Caco-2 (cell line): ENCODE measurements at regions of chr6 and their contacts with region 1.

Region 1: GRCh38 chr6:43723737-43724295 is 36.2 kb upstream of the MRPS18A start:
- DNase-seq: peak; percentile 74 to 82
- H3K4me3 ChIP-seq: no peak overlapping the region
- H3K4me3 Mint-ChIP-seq: no peak overlapping the region
- H3K27ac Mint-ChIP-seq: no peak overlapping the region
- H3K4me1 ChIP-seq: no peaks in the 10 kb centered on the region
- H3K4me1 Mint-ChIP-seq: no peaks in the 10 kb centered on the region
- H3K27me3 ChIP-seq: no peaks in the 10 kb centered on the region
- H3K27me3 Mint-ChIP-seq: no peaks in the 10 kb centered on the region
- CTCF ChIP-seq: peak; percentile 73 to 79

Region 2: GRCh38 chr6:43667245-43668150 is 56.3 kb before region 1 on chr6:
- CTCF ChIA-PET with region 1: no interaction called
- POLR2A ChIA-PET with region 1: no interaction called
- intact Hi-C with region 1: loop called (anchors 5 kb)
- DNase-seq: peak; percentile 84 to 91
- H3K4me3 ChIP-seq: 0 out of 2 replicates have a peak overlapping the region, but pooled peaks have one; percentile 4
- H3K4me3 Mint-ChIP-seq: peak overlapping the region; percentile 56
- H3K27ac Mint-ChIP-seq: peak overlapping the region; percentile 73
- H3K4me1 ChIP-seq: peaks cover 9% of the 10 kb centered on the region
- H3K4me1 Mint-ChIP-seq: no peaks in the 10 kb centered on the region
- H3K27me3 ChIP-seq: no peaks in the 10 kb centered on the region
- H3K27me3 Mint-ChIP-seq: no peaks in the 10 kb centered on the region
- CTCF ChIP-seq: peak; percentile 93 to 94

Region 3: DNA sequence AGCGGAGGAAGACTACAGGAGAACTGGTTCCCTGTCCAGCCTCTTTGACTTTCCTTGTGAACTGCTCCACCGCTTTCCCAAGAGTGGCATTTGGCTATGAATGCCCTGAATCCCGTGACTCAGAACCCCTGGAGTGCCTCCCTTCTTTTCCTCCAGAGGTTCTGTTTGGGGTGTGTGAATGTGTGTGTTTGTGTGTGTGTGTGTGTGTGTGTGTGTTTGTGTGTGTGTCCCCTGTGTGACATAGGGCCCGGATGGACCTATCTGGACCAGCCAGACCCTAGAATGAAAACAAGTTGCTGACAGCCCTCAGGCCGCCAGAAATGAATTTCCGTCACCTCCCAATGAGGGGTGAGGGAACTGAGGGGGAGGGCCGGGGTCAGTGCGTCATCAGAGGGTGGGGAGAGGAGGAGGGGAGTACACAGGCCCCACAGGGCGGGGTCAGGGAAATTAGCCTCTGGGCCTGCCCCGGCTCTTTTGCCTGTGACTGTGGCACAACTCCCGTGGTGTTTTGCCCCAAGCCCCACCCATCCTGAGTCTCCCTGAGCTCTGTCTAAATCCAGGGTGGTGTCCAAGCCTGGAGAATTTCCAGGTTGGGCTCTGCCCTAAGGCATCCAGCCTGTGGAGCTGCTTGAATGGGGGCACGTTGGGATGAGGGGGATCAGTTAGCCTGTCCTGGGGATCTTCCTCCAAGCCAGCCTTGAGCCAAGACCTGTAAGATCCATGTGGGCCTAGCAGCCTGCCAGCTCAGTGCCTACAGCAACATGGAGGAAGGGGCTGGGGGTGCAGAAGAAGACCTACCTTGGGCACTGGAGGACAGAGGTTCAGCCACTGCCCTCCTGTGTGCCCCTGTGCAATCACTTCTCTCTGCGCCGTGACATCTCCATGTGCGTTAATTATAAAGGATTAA is 21.0 kb before region 1 on chr6:
- CTCF ChIA-PET with region 1: no interaction called
- POLR2A ChIA-PET with region 1: no interaction called
- intact Hi-C with region 1: no loop called
- DNase-seq: peak; percentile 64 to 80
- H3K4me3 ChIP-seq: no peak overlapping the region
- H3K4me3 Mint-ChIP-seq: no peak overlapping the region
- H3K27ac Mint-ChIP-seq: no peak overlapping the region
- H3K4me1 ChIP-seq: peaks cover 30% of the 10 kb centered on the region
- H3K4me1 Mint-ChIP-seq: peaks cover 42% of the 10 kb centered on the region
- H3K27me3 ChIP-seq: no peaks in the 10 kb centered on the region
- H3K27me3 Mint-ChIP-seq: no peaks in the 10 kb centered on the region
- CTCF ChIP-seq: no peak

Region 4: DNA sequence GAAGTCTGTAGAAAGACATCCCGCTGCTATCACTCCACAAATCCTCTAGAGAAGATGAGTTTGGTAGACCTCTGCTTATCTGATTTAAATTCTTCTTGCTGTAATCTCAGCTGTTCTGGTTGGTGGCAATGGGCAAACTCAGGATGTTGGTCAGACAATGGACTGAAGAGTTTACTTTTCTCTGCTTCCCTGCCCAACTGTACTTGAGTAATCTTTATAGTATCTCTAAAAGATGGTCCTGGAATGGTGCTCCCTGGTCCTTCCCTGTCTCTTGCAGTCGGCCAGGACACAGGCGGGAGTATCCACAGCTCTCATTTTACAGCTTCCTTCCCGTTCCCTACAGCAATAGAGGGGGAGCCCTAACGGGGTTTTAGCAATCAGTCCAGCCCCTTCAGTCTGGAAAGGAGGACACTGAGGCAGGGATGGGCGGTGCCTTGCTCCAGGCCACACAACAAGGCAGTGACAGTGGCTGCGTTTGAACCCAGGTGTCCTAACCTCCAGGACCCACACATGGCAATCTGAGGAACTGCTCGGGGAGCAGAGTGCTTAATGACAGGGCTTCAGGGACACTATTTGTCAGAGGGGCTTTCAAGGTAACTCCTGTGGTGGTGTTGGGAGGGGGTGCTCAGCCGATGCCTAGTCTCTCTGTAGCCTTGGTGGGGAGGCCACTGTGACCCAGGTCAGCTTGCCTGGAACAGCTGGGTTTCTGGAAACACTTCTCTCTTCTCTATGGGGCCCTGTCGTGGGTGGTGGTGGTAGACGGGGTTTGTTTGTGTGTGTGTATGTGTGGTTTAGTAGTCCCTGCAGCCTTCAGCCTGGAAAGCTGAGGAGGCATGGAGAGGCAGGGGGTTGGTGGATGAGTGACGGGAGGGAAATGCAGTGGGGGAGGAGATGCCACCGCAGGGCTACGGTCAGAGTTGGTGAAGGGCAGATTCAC is 36.7 kb after region 1 on chr6:
- CTCF ChIA-PET with region 1: no interaction called
- POLR2A ChIA-PET with region 1: no interaction called
- intact Hi-C with region 1: loop called (anchors 1 kb)
- DNase-seq: no peak
- H3K4me3 ChIP-seq: no peak overlapping the region
- H3K4me3 Mint-ChIP-seq: no peak overlapping the region
- H3K27ac Mint-ChIP-seq: peak overlapping the region; percentile 21
- H3K4me1 ChIP-seq: peaks cover 25% of the 10 kb centered on the region
- H3K4me1 Mint-ChIP-seq: peaks cover 20% of the 10 kb centered on the region
- H3K27me3 ChIP-seq: no peaks in the 10 kb centered on the region
- H3K27me3 Mint-ChIP-seq: no peaks in the 10 kb centered on the region
- CTCF ChIP-seq: no peak

Region 5: GRCh38 chr6:43817192-43817591 is 93.4 kb after region 1 on chr6:
- CTCF ChIA-PET with region 1: no interaction called
- POLR2A ChIA-PET with region 1: no interaction called
- intact Hi-C with region 1: no loop called
- DNase-seq: peak; percentile 66 to 69
- H3K4me3 ChIP-seq: no peak overlapping the region
- H3K4me3 Mint-ChIP-seq: no peak overlapping the region
- H3K27ac Mint-ChIP-seq: peak overlapping the region; percentile 56
- H3K4me1 ChIP-seq: peaks cover 57% of the 10 kb centered on the region
- H3K4me1 Mint-ChIP-seq: peaks cover 55% of the 10 kb centered on the region
- H3K27me3 ChIP-seq: no peaks in the 10 kb centered on the region
- H3K27me3 Mint-ChIP-seq: no peaks in the 10 kb centered on the region
- CTCF ChIP-seq: peak; percentile 19 to 80

Region 6: GRCh38 chr6:43838276-43839036 is 114.6 kb after region 1 on chr6:
- CTCF ChIA-PET with region 1: no interaction called
- POLR2A ChIA-PET with region 1: no interaction called
- intact Hi-C with region 1: loop called (anchors 5 kb)
- DNase-seq: peak; percentile 64 to 70
- H3K4me3 ChIP-seq: no peak overlapping the region
- H3K4me3 Mint-ChIP-seq: peak overlapping the region; percentile 52
- H3K27ac Mint-ChIP-seq: peak overlapping the region; percentile 92
- H3K4me1 ChIP-seq: peaks cover 63% of the 10 kb centered on the region
- H3K4me1 Mint-ChIP-seq: peaks cover 31% of the 10 kb centered on the region
- H3K27me3 ChIP-seq: no peaks in the 10 kb centered on the region
- H3K27me3 Mint-ChIP-seq: no peaks in the 10 kb centered on the region
- CTCF ChIP-seq: peak; percentile 62 to 72

Region 7: GRCh38 chr6:43931201-43931600 is 207.4 kb after region 1 on chr6:
- CTCF ChIA-PET with region 1: no interaction called
- POLR2A ChIA-PET with region 1: no interaction called
- intact Hi-C with region 1: no loop called
- DNase-seq: no peak
- H3K4me3 ChIP-seq: no peak overlapping the region
- H3K4me3 Mint-ChIP-seq: no peak overlapping the region
- H3K27ac Mint-ChIP-seq: no peak overlapping the region
- H3K4me1 ChIP-seq: peaks cover 30% of the 10 kb centered on the region
- H3K4me1 Mint-ChIP-seq: peaks cover 27% of the 10 kb centered on the region
- H3K27me3 ChIP-seq: no peaks in the 10 kb centered on the region
- H3K27me3 Mint-ChIP-seq: no peaks in the 10 kb centered on the region
- CTCF ChIP-seq: no peak

Region 8: GRCh38 chr6:43951063-43951755 is 227.4 kb after region 1 on chr6:
- CTCF ChIA-PET with region 1: interaction called, 3 read pairs
- POLR2A ChIA-PET with region 1: no interaction called
- intact Hi-C with region 1: loop called (anchors 5 kb)
- DNase-seq: peak; percentile 75 to 82
- H3K4me3 ChIP-seq: no peak overlapping the region
- H3K4me3 Mint-ChIP-seq: no peak overlapping the region
- H3K27ac Mint-ChIP-seq: no peak overlapping the region
- H3K4me1 ChIP-seq: 0 out of 2 replicates have a peak, but pooled peaks cover 3% of the 10 kb centered on the region
- H3K4me1 Mint-ChIP-seq: no peaks in the 10 kb centered on the region
- H3K27me3 ChIP-seq: no peaks in the 10 kb centered on the region
- H3K27me3 Mint-ChIP-seq: no peaks in the 10 kb centered on the region
- CTCF ChIP-seq: peak; percentile 59 to 89